CD14-positive monocyte (primary cell): ENCODE measurements at regions of chr2 and their contacts with region 1.

Region 1: DNA sequence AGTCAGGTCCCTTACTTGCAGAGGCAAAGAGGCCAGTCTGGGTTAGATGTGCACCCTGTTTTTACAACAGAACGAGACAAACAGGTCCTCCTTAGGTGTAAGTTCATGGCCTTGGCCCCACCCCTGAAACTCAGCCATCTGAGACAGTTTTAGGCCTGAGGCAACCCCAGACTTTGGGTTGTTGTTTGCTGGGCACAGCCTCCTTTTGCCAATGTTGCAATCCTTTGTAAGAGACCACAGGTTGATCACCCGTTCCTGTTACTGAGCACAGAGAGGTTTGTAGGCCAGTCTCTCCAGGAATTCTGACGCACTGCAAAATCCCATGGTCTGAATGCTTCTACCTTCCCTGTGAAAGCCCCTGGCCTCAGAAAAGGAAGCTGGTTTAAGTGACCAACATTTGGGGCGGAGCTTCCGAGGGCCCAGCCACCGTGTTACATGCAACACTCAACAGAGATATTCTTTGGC is 15.5 kb upstream of the IL1RN start:
- DNase-seq: peak; percentile 73 to 98 (median 79)
- H3K4me3 ChIP-seq: peak overlapping the region in 1 of 3 experiments; percentile 5
- H3K4me3 Mint-ChIP-seq: peak overlapping the region in 1 of 2 donors; percentile 53
- H3K27ac ChIP-seq: peak overlapping the region; percentile 38 to 65
- H3K27ac Mint-ChIP-seq: peak overlapping the region in 3 of 7 donors; percentile 61 to 88 (median 71)
- H3K4me1 ChIP-seq: peaks cover 57 to 59% of the 10 kb centered on the region in 2 donors
- H3K4me1 Mint-ChIP-seq: no peaks in the 10 kb centered on the region
- H3K27me3 ChIP-seq: no peaks in the 10 kb centered on the region
- H3K27me3 Mint-ChIP-seq: no peaks in the 10 kb centered on the region
- CTCF ChIP-seq: no peak

Region 2: GRCh38 chr2:112996635-112997034 is 115.2 kb before region 1 on chr2:
- intact Hi-C with region 1: no loop called
- DNase-seq: no peak
- H3K4me3 ChIP-seq: no peak overlapping the region
- H3K4me3 Mint-ChIP-seq: no peak overlapping the region
- H3K27ac ChIP-seq: no peak overlapping the region
- H3K27ac Mint-ChIP-seq: no peak overlapping the region
- H3K4me1 ChIP-seq: no peaks in the 10 kb centered on the region
- H3K4me1 Mint-ChIP-seq: no peaks in the 10 kb centered on the region
- H3K27me3 ChIP-seq: no peaks in the 10 kb centered on the region
- H3K27me3 Mint-ChIP-seq: peaks cover 3 to 9% (median 7%) of the 10 kb centered on the region in 3 donors
- CTCF ChIP-seq: no peak

Region 3: DNA sequence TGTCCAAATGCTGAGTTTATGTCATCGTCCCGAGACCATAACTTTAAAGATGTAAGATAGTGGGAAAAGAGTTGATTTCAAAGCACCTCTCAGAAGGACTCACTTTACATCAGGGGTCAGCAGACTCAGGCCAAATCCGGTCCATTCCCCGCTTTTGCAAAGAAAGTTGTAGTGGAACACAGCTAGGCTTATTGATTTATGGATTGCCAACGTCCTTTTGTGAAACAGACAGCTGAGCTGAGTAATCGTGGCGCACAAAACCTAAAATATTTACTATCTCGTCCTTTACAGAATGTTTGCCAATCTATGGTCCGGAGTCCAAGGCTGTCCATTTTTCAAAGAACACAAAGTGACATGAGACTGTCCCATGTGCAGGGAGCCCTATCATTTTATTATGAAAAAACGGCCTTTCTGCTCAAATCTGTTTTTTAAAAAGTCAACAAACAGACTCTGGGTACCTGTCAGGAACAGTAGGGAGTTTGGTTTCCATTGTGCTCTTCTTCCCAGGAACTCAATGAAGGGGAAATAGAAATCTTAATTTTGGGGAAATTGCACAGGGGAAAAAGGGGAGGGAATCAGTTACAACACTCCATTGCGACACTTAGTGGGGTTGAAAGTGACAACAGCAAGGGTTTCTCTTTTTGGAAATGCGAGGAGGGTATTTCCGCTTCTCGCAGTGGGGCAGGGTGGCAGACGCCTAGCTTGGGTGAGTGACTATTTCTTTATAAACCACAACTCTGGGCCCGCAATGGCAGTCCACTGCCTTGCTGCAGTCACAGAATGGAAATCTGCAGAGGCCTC is 15.2 kb after region 1 on chr2 and contains the start of gene IL1RN:
- intact Hi-C with region 1: loop called in 1 of 2 experiments (anchors 2 kb)
- DNase-seq: peak; percentile 90 to 98 (median 95)
- H3K4me3 ChIP-seq: peak within 1 kb of the TSS; percentile 75 to 99 (median 89)
- H3K4me3 Mint-ChIP-seq: peak within 1 kb of the TSS; percentile 97 to 98
- H3K27ac ChIP-seq: peak within 1 kb of the TSS; percentile 91 to 95
- H3K27ac Mint-ChIP-seq: peak within 1 kb of the TSS; percentile 97 to 99 (median 99)
- H3K4me1 ChIP-seq: peaks cover 72 to 89% of the 10 kb centered on the region in 2 donors
- H3K4me1 Mint-ChIP-seq: peaks cover 82% of the 10 kb centered on the region
- H3K27me3 ChIP-seq: no peaks in the 10 kb centered on the region
- H3K27me3 Mint-ChIP-seq: peaks cover 0 to 2% (median 0%) of the 10 kb centered on the region in 3 donors
- CTCF ChIP-seq: no peak
- polyA plus RNA-seq, gene IL1RN: 89.9 to 109 (median 92.0) TPM

Region 4: DNA sequence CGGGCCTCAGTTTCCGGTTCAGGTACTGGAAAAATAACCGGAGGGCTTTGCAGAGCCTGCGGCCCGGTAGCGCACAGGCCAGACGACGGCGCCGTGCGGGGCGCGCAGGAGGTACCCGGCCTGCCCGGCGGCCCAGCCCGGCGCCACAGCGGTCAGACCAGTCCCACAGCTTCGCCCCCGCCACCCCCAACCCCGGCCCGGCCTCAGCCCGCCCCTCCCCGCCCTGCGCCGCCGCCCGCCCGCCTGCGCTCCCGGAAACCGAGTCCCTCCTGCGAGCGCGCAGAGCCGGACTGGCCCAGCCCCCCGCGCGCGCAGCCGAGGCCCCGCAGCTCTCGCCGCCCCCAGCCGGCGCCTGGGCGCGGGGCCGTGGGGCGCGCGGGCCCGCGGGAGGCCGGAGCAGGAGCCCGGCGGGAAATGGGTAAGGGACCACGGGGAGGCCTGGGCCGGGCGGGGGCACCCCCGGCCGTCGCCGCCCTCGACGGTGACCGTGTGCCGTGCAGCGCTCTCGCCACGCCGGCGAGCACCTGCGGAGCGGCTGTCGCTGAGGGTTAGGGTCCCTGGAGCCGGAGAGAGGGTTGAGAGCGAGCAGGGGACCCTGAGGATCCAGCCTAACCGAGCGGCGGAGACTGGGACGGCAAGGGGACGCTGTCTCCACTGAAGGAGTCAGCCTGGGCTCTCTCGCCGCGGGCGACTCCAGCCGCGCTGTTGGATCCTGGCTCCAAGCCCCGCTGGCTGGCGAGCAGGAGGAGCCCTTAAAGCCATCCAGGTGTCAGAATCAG is 45.5 kb after region 1 on chr2:
- intact Hi-C with region 1: no loop called
- DNase-seq: no peak
- H3K4me3 ChIP-seq: peak overlapping the region; percentile 41 to 75 (median 43)
- H3K4me3 Mint-ChIP-seq: peak overlapping the region; percentile 74 to 88
- H3K27ac ChIP-seq: no peak overlapping the region
- H3K27ac Mint-ChIP-seq: no peak overlapping the region
- H3K4me1 ChIP-seq: peaks cover 6 to 13% of the 10 kb centered on the region in 2 donors
- H3K4me1 Mint-ChIP-seq: peaks cover 11% of the 10 kb centered on the region
- H3K27me3 ChIP-seq: peaks cover 7 to 18% of the 10 kb centered on the region in 2 donors
- H3K27me3 Mint-ChIP-seq: peaks cover 12 to 18% (median 16%) of the 10 kb centered on the region in 3 donors
- CTCF ChIP-seq: no peak